Activated naive CD4-positive, alpha-beta T cell treated with anti-CD3 and anti-CD28 coated beads, Interleukin-2, amount 10 ng/mL, durations not matched to agents 7 days and 5 days (primary cell): ENCODE measurements at regions of chr1 and their contacts with region 1.

Region 1: DNA sequence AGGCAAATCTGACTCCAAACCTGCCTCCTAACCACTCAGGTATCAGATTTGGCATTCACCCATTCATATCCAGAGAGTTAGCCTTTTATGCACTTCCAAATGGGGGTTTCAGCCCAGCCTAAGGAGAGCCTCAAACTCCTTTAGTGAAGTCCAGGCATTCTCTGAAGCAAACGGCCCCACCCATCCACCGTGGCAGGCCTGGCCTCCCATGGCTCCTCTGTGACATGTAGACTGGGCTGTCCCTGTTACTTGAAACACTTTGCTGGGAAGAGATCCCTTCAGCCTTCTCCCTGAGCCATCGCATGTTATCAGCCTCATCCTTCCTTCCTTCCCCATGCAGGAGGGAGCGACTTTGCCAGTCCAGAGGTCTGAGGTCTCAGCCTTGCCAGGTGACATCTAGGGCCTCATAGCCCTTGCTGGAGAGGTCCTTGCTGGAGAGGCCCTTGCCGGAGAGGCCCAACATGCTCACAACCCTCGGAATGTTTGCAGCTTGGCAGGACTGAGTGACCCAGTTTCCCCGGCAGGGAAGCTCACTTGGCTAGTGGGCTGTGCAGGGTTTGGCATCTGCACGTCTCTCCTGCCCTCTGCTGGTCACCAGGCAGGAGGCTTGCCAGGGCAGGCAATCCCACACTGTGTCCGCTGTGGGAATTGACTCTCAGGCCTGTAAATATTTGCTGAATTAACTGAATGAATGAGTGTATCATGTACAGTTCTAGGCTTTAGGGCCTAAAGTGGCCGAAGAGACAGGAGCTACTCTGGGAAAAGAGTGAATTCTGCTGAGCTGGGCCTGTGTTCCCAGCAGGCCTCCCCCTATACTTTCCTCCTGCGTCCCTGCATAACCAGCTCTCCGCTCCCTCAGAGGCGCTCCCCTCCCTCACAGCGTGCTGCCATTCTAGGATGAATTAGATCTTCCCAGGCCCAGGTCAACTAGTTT is 26.7 kb upstream of the RBM15 start:
- DNase-seq: peak; percentile 82
- H3K4me3 Mint-ChIP-seq: no peak overlapping the region
- H3K27ac Mint-ChIP-seq: no peak overlapping the region
- H3K4me1 Mint-ChIP-seq: no peaks in the 10 kb centered on the region
- H3K27me3 Mint-ChIP-seq: no peaks in the 10 kb centered on the region

Region 2: DNA sequence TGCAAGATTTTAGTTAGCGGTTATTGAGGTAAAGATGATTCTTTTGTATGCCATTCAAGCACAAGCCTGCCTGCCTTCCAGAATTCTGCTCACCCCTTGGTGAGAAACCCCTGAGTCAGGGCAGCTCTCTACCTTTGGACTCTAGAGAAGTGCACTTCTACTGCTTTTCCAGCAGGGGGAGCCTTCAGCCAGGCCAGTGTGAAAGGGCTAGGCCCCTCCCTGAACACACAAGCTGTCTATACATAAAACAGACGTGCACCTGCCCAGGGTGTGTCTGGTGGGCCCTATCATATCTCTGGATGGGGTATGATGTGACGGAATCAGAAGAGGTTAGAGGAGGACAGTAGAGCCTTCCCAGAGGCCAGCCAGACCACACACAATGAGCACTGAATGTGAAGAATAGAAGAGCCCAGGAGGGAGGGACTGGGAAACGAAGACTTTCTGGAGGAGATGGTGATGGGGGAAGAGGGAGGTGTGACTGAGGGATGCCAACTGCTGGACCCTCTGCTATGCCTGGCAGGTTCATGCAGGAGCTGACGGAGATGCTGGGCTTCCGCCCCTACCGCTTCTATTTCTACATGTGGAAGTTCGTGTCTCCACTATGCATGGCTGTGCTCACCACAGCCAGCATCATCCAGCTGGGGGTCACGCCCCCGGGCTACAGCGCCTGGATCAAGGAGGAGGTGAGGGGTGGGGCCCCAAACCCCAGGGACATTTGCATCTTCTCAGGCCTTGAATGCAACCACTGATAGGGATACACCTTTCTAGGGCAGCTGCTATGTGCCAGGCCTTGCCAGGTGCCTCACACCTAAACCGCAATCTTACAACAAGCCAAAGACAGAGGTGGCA is 115.3 kb before region 1 on chr1:
- CTCF ChIA-PET with region 1: interaction called, 470 read pairs
- DNase-seq: peak; percentile 66
- H3K4me3 Mint-ChIP-seq: no peak overlapping the region
- H3K27ac Mint-ChIP-seq: no peak overlapping the region
- H3K4me1 Mint-ChIP-seq: no peaks in the 10 kb centered on the region
- H3K27me3 Mint-ChIP-seq: no peaks in the 10 kb centered on the region

Region 3: DNA sequence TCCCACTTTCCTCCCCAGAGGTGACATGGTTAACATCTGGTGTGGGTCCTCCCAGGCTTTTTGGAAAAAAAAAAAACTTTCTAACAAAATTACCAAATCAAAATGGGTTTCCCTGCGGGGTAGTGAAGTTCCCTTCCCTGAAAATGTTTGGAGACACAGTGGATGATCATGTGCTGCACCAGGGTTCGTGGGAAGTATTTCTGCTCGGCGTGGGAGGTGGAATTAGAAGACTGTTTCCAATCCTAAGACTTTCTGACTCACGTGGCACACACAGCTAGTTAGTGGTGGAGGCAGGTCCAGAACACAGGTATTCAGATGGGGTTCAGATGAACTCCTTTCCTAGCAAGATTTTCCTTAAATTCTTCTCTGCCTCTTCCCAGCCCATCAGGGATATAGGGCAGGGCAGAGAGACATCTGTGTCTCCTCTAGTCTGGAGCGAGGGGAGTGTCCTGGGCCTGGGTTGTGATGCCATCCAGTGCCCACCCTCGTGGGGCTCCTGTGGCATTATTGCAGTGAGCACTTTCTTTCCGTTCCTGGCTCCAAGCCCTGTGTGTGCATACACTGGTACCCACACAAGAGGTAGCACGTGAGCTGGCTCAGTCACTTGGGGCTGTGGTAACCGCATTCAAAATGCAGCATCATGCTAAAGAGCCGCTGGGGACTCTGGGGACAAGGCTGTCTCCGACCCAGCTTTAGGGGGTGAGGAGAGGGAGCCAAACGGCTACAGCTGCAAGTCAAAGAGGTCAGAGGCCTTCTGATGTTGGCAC is 74.9 kb before region 1 on chr1:
- CTCF ChIA-PET with region 1: no interaction called
- DNase-seq: no peak
- H3K4me3 Mint-ChIP-seq: no peak overlapping the region
- H3K27ac Mint-ChIP-seq: no peak overlapping the region
- H3K4me1 Mint-ChIP-seq: no peaks in the 10 kb centered on the region
- H3K27me3 Mint-ChIP-seq: no peaks in the 10 kb centered on the region

Region 4: GRCh38 chr1:110341146-110341871 is 28.9 kb after region 1 on chr1:
- CTCF ChIA-PET with region 1: no interaction called
- DNase-seq: no peak
- H3K4me3 Mint-ChIP-seq: no peak overlapping the region
- H3K27ac Mint-ChIP-seq: no peak overlapping the region
- H3K4me1 Mint-ChIP-seq: peaks cover 74% of the 10 kb centered on the region
- H3K27me3 Mint-ChIP-seq: no peaks in the 10 kb centered on the region